ENCODE measurements at regions of chr6 and their contacts with region 1.

Region 1: DNA sequence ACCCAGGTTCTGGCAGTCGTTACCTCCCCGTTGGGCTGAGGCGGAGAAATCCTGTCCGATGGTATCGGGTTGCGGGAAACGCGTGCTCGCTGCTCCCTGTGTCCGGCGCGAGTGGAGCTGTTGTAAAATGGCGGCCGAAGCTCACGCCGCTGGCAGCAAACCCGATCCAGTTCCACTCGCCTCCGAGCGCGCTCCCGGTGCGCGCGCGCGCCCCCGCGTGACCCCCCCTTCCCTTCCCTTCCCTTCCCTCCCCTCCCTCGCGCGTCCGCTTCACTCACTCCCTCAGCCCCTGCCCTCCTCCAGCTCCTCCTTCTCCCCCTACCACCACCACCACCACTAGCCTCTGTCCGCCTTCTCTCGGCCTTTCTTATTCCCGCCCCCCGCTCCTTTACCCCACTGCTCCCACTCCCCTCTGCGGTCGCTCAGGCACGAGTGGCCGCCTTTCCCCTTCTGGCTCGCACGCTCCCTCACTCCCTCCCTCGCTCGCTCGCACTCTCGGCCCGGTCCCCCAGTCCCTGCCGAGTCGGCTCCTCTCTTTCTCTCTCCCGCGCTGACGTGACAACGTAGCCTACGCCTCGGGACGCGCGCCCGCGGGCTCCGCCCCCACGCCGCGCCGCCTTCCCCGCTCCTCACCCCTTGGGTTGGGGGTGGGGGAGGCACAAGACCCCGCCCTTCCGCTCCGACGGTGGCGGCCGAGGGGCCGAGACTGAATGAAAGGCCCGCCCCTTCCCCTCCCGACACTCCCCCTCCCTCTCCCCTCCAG is at the start of gene SYNCRIP:
- DNase-seq: peak; percentile 97 to 99 (median 98)
- H3K4me3 ChIP-seq: peak within 1 kb of the TSS; percentile 92
- H3K4me3 Mint-ChIP-seq: peak within 1 kb of the TSS; percentile 93 to 96 (median 95)
- H3K27ac ChIP-seq: peak within 1 kb of the TSS; percentile 96
- H3K27ac Mint-ChIP-seq: peak within 1 kb of the TSS; percentile 96 to 99 (median 99)
- H3K4me1 ChIP-seq: peaks cover 31% of the 10 kb centered on the region
- H3K4me1 Mint-ChIP-seq: peaks cover 49 to 52% (median 50%) of the 10 kb centered on the region in 3 donors
- H3K27me3 ChIP-seq: no peaks in the 10 kb centered on the region
- H3K27me3 Mint-ChIP-seq: peaks cover 0 to 3% of the 10 kb centered on the region in 2 donors
- total RNA-seq, gene SYNCRIP: 247 to 249 TPM

Region 2: DNA sequence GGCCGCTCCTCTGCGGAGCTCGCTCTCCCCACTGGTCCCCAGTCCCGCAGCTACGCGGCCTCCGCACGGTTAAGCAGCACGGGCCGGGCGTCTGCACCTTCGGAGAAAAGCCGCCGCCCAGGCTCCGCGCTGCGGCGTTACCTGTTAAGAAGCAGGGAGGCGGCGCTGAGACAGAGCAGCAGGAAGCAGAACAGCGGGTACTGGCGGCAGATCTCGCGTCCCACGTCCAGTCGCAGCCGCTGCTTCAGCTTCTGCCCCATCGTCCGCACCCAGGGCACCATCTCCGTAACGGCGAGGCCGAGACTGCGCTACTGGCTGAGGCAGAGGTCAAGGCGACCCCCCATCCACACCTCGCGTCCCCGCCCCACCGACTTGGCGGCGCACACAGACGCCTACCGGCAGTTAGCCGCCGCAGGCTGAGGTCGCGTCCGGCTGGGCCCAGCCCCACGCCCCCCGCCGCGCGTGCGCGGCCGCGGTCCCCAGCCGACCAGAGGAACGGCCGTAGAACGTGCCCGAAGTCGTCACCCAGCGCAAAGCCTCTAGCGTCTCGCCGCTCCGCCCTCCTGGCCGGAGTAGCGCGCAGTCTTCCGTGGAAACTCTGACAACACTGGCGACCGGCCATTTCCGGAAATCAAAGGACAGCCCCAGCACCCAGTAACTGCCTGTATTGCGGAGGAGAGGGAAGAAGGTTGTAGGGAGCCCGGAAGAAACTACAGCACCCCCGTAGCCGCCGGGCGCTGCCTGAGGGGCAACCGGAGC is 49.3 kb before region 1 on chr6 and contains the start of gene SNX14:
- CTCF ChIA-PET with region 1: interaction called, 8 read pairs
- POLR2A ChIA-PET with region 1: interaction called, 57 read pairs
- DNase-seq: peak; percentile 61 to 88 (median 81)
- H3K4me3 ChIP-seq: peak within 1 kb of the TSS; percentile 71
- H3K4me3 Mint-ChIP-seq: peak within 1 kb of the TSS; percentile 90 to 99 (median 98)
- H3K27ac ChIP-seq: peak within 1 kb of the TSS; percentile 80
- H3K27ac Mint-ChIP-seq: peak within 1 kb of the TSS; percentile 83 to 99 (median 98)
- H3K4me1 ChIP-seq: peaks cover 15% of the 10 kb centered on the region
- H3K4me1 Mint-ChIP-seq: peaks cover 45 to 58% (median 58%) of the 10 kb centered on the region in 3 donors
- H3K27me3 ChIP-seq: no peaks in the 10 kb centered on the region
- H3K27me3 Mint-ChIP-seq: no peaks in the 10 kb centered on the region
- total RNA-seq, gene SNX14: 52.4 to 56.1 TPM

Region 3: GRCh38 chr6:85669735-85670194 is 26.8 kb after region 1 on chr6:
- CTCF ChIA-PET with region 1: interaction called, 86 read pairs
- POLR2A ChIA-PET with region 1: interaction called, 356 read pairs
- DNase-seq: peak in 4 of 5 donors; percentile 17 to 69 (median 64)
- H3K4me3 ChIP-seq: no peak overlapping the region
- H3K4me3 Mint-ChIP-seq: peak overlapping the region; percentile 30 to 86 (median 78)
- H3K27ac ChIP-seq: peak overlapping the region; percentile 30
- H3K27ac Mint-ChIP-seq: peak overlapping the region; percentile 76 to 99 (median 96)
- H3K4me1 ChIP-seq: peaks cover 43% of the 10 kb centered on the region
- H3K4me1 Mint-ChIP-seq: peaks cover 52 to 63% (median 62%) of the 10 kb centered on the region in 3 donors
- H3K27me3 ChIP-seq: no peaks in the 10 kb centered on the region
- H3K27me3 Mint-ChIP-seq: no peaks in the 10 kb centered on the region

Region 4: GRCh38 chr6:85678602-85679444 is 35.9 kb after region 1 on chr6:
- CTCF ChIA-PET with region 1: interaction called, 86 read pairs
- POLR2A ChIA-PET with region 1: interaction called, 356 read pairs
- DNase-seq: peak; percentile 95 to 99 (median 99)
- H3K4me3 ChIP-seq: peak overlapping the region; percentile 96
- H3K4me3 Mint-ChIP-seq: peak overlapping the region; percentile 96 to 100 (median 98)
- H3K27ac ChIP-seq: peak overlapping the region; percentile 95
- H3K27ac Mint-ChIP-seq: peak overlapping the region; percentile 94 to 100 (median 98)
- H3K4me1 ChIP-seq: peaks cover 37% of the 10 kb centered on the region
- H3K4me1 Mint-ChIP-seq: peaks cover 41 to 48% (median 48%) of the 10 kb centered on the region in 3 donors
- H3K27me3 ChIP-seq: no peaks in the 10 kb centered on the region
- H3K27me3 Mint-ChIP-seq: peaks cover 0 to 6% of the 10 kb centered on the region in 2 donors

Measured in CD8-positive, alpha-beta memory T cell (primary cell).